ENCODE measurements at regions of chr4 and their contacts with region 1.

Region 1: GRCh38 chr4:169659716-169660670 is 39.6 kb downstream of the CLCN3 start:
- DNase-seq: peak; percentile 99
- ATAC-seq: peak; percentile 94
- H3K4me3 ChIP-seq: peak overlapping the region; percentile 60 to 63
- H3K27ac ChIP-seq: peak overlapping the region; percentile 79
- H3K4me1 ChIP-seq: peaks cover 32 to 44% of the 10 kb centered on the region in 2 experiments
- H3K27me3 ChIP-seq: no peaks in the 10 kb centered on the region
- CTCF ChIP-seq: no peak
- POLR2A ChIP-seq: no peak
- RAD21 ChIP-seq: no peak

Region 2: DNA sequence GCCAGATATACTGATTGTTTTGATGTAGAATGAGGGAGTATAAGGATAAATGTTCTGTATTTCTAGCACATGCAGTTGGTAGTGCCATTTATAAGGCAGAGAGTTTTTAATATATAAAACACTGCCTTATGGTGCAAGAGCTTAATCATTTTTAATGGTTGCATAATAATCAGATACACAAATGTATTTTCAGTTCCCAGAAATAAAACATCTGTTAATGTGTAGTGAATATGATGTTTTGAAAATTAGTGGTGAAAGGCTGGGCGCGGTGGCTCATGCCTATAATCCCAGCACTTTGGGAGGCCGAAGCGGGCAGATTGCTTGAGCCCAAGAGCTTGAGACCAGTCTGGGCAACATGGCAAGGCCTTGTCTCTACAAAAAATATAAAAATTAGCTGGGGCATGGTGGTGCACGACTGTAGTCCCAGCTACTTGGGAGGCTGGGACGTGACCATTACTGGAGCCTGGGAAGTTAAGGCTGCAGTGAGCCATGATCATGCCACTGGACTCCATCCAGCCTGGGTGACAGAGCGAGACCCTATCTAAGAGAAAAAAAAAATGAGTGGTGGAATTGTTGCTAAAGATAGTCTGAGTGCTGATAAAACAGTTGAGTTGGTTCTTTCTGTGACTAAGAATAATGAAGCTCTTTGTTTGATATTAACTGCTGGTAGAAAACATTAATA is 10.3 kb before region 1 on chr4:
- CTCF ChIA-PET with region 1: interaction called, 3 read pairs
- POLR2A ChIA-PET with region 1: interaction called, 17 read pairs
- RAD21 ChIA-PET with region 1: no interaction called
- intact Hi-C with region 1: no loop called
- DNase-seq: no peak
- ATAC-seq: no peak
- H3K4me3 ChIP-seq: no peak overlapping the region
- H3K27ac ChIP-seq: no peak overlapping the region
- H3K4me1 ChIP-seq: no peaks in the 10 kb centered on the region
- H3K27me3 ChIP-seq: no peaks in the 10 kb centered on the region
- CTCF ChIP-seq: no peak
- POLR2A ChIP-seq: no peak
- RAD21 ChIP-seq: no peak

Region 3: GRCh38 chr4:171288816-171289432 is 1628.9 kb after region 1 on chr4:
- CTCF ChIA-PET with region 1: no interaction called
- POLR2A ChIA-PET with region 1: no interaction called
- RAD21 ChIA-PET with region 1: no interaction called
- intact Hi-C with region 1: no loop called
- DNase-seq: no peak
- ATAC-seq: no peak
- H3K4me3 ChIP-seq: no peak overlapping the region
- H3K27ac ChIP-seq: no peak overlapping the region
- H3K4me1 ChIP-seq: no peaks in the 10 kb centered on the region
- H3K27me3 ChIP-seq: no peaks in the 10 kb centered on the region
- CTCF ChIP-seq: no peak
- POLR2A ChIP-seq: no peak
- RAD21 ChIP-seq: no peak